Common myeloid progenitor, CD34-positive (primary cell): ENCODE measurements at regions of chr1 and their contacts with region 1.

Region 1: GRCh38 chr1:17125756-17126237 is 6.5 kb upstream of the PADI2 start:
- DNase-seq: peak; percentile 80 to 88 (median 84)
- H3K4me3 ChIP-seq: no peak overlapping the region
- H3K27ac ChIP-seq: no peak overlapping the region
- H3K4me1 ChIP-seq: peaks cover 6 to 59% (median 37%) of the 10 kb centered on the region in 4 experiments
- H3K27me3 ChIP-seq: no peaks in the 10 kb centered on the region

Region 2: DNA sequence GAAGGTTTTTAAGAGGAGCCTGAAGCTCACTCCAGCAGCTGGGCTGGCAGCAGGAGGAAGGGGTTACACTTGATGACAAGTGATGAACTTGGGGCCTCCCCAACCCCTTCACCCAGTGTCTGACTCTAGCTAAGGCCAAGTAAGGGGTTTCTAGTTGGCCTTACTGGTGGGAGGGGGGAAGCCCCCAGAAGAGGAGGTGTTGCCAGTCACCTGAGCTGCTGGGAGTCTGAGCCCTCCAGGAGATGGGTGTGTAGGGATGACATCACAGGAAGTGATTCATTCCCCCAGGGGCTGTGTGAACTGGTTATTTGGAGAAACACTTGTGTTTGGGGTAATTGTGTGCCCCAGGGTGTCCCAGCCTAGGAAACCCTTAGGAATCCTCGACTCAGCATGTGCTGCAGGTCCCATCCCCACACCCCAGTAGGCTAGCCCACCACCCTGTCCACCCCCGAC is 82.2 kb after region 1 on chr1:
- CTCF ChIA-PET with region 1: interaction called, 14 read pairs
- POLR2A ChIA-PET with region 1: no interaction called
- DNase-seq: peak; percentile 70 to 87 (median 84)
- H3K4me3 ChIP-seq: peak overlapping the region in 1 of 7 experiments; percentile 16
- H3K27ac ChIP-seq: no peak overlapping the region
- H3K4me1 ChIP-seq: peaks cover 2 to 48% (median 33%) of the 10 kb centered on the region in 4 experiments
- H3K27me3 ChIP-seq: no peaks in the 10 kb centered on the region

Region 3: GRCh38 chr1:17244816-17245740 is 119.3 kb after region 1 on chr1:
- CTCF ChIA-PET with region 1: interaction called, 156 read pairs
- POLR2A ChIA-PET with region 1: no interaction called
- DNase-seq: no peak
- H3K4me3 ChIP-seq: no peak overlapping the region
- H3K27ac ChIP-seq: no peak overlapping the region
- H3K4me1 ChIP-seq: peaks cover 0 to 33% (median 20%) of the 10 kb centered on the region in 4 experiments
- H3K27me3 ChIP-seq: peaks cover 0 to 4% (median 0%) of the 10 kb centered on the region in 5 experiments

Region 4: DNA sequence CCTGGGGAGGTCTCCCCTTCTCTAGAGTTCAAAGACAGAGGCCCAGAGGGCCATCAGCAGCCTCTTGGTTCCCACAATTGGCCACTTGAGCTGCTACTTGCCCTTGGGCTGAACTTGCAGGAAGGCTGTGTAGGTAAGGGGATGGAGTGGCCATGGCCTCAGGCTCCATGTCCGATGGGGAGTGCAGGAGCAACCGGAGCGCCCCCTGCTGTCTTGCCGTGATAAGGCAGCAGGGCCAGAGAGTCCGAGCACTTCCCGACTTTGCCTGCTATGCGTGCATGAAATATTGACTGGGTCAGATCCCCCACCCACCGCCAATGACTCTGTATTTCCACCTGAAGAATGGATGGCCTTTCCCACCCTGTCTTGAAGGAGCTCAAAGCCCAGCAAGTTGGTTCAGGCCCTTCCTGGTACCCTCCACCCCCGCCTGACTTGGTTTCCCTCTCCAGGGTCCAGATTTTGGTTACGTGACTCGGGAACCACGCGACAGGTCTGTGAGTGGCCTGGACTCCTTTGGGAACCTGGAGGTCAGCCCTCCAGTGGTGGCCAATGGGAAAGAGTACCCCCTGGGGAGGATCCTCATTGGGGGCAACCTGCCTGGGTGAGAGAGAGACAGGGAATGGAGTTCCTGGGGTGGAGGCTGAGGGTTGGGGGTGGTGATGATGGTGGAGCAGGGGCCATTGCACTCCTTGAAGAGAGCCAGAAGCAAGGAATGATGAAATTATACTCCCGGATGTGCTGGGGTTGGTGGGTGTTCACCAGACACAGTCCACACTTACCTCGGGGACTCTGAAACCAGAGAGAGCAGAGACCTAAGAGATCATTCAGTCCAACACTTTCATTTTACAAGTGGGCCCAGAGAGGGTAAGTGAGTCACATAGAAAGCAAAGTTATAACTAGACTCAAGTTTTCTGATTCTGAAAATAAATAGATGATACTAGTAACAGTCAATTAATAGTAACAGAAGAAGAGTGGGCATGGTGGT is 148.7 kb after region 1 on chr1:
- CTCF ChIA-PET with region 1: interaction called, 17 read pairs
- POLR2A ChIA-PET with region 1: interaction called, 3 read pairs
- DNase-seq: peak; percentile 40 to 59 (median 44)
- H3K4me3 ChIP-seq: no peak overlapping the region
- H3K27ac ChIP-seq: no peak overlapping the region
- H3K4me1 ChIP-seq: peaks cover 0 to 40% (median 13%) of the 10 kb centered on the region in 4 experiments
- H3K27me3 ChIP-seq: no peaks in the 10 kb centered on the region